Activated T-helper 1 cell treated with anti-CD3 and anti-CD28 coated beads, Interleukin-12 subunit alpha, Interleukin-12 subunit beta, Interleukin-2, Interleukin-4 antibody, amounts not matched to agents 30 ng/mL and 10 ng/mL and 1 ng/mL, durations not matched to agents 14 hours and 24 hours and 36 hours (primary cell): ENCODE measurements at regions of chr22 and their contacts with region 1.

Region 1: DNA sequence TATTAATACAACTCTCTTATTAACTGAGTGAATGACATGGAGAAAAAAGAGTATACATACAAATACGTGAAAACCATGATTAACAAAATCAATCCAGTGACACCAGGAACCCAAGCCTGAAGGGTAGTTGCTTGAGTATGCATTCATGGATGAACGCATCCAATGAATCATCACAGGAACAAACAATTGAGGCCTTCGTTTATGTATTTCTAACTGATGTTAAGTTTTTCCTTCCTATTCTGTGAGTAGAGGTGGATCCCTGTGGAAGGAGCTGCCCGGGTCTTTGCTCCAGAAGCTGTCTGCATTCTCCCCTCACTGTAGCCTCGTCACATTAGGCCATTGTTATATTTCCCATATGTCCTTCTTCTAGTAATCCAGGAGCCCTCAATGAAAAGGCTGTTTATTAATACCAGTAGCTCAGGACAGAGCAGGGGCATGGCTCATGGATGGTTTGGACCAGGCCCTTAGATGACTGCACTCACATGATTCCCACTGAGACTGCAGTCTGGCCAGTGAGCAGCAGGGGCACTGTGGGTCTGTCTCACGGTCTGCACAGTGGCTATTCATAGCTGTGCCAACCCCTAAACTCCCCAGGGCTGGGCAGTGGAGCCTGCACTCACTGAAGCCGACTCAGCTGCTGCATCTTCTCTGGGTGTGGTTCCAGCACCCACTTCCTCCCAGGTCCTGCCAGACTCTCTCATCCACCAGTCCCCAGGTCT is 128.1 kb upstream of the TOP3B start:
- DNase-seq: peak; percentile 60
- H3K4me3 Mint-ChIP-seq: peak overlapping the region; percentile 43
- H3K27ac Mint-ChIP-seq: peak overlapping the region; percentile 79
- H3K4me1 Mint-ChIP-seq: peaks cover 27% of the 10 kb centered on the region
- H3K27me3 Mint-ChIP-seq: peaks cover 7% of the 10 kb centered on the region

Region 2: DNA sequence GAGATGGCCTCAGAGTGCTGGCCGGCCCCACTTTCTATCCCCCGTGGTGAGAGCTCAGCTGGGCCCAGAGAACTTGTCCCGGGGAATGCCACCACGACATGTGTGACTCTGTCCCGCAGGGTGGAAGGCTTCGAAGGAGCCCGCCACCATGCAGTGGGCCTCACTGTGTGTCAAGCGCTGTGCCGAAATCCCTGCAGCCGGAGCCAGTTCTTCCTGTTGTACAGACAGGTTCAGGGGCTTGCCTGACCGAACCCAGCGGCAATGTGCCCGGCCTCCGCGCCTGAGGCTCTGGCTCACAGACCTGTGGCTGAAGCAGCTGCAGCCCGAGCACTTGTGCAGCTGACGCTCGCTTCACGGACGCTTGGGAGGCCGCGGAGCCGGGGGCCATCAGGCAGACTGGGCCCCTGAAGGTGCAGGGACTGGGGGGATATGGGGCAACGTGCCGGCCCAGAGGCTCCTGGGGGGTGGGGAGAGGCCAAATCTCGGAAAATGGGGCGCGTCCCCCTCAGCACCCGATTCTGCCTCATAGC is 158.7 kb before region 1 on chr22:
- intact Hi-C with region 1: no loop called
- DNase-seq: no peak
- H3K4me3 Mint-ChIP-seq: peak overlapping the region; percentile 79
- H3K27ac Mint-ChIP-seq: peak overlapping the region; percentile 61
- H3K4me1 Mint-ChIP-seq: peaks cover 6% of the 10 kb centered on the region
- H3K27me3 Mint-ChIP-seq: no peaks in the 10 kb centered on the region

Region 3: DNA sequence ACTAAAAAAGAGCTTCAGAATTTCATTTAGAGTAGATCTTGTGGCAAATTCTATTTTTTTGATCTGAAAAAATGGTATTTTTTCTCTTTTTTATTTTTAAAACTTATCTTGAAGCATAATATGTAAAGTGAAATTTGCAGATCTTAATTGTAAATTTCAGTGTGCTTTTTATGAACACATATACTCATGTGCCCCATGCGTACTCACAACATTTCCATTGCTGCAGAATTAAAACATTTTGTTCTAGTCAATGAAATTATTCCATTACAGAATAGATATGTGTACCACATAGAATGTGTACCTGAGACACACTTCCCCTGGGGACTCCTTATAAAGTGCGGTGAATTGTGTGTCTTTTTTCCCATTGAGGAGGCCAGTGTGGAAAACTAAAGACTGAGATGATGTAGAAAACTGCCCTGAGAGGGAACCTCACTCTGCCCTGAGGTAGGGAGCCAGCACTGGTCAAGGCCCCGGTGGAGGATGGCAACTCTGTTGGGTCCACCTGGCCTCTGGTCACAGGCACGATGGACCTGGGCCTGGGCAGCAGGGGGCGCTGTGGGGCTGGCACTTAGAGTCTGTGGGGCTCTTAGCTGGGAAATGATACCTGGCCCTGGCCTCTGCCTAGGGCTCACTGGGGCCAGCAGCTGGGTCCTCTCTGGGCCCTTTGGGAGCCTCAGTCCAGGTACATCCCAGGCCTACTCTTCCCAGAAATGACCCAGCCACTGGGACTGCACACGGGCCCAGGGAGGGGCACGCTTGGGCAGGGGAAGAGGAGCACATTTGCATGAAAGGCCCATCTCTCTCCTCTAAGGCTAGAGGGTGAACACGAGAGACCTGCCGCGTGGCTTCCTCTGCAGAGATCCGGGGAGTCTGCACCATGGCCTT is 50.3 kb before region 1 on chr22:
- intact Hi-C with region 1: loop called (anchors 1 kb)
- DNase-seq: peak; percentile 46
- H3K4me3 Mint-ChIP-seq: no peak overlapping the region
- H3K27ac Mint-ChIP-seq: no peak overlapping the region
- H3K4me1 Mint-ChIP-seq: no peaks in the 10 kb centered on the region
- H3K27me3 Mint-ChIP-seq: peaks cover 12% of the 10 kb centered on the region

Region 4: GRCh38 chr22:22092974-22093373 is 17.7 kb before region 1 on chr22:
- intact Hi-C with region 1: loop called (anchors 1 kb)
- DNase-seq: no peak
- H3K4me3 Mint-ChIP-seq: no peak overlapping the region
- H3K27ac Mint-ChIP-seq: peak overlapping the region; percentile 3
- H3K4me1 Mint-ChIP-seq: peaks cover 31% of the 10 kb centered on the region
- H3K27me3 Mint-ChIP-seq: peaks cover 14% of the 10 kb centered on the region

Region 5: DNA sequence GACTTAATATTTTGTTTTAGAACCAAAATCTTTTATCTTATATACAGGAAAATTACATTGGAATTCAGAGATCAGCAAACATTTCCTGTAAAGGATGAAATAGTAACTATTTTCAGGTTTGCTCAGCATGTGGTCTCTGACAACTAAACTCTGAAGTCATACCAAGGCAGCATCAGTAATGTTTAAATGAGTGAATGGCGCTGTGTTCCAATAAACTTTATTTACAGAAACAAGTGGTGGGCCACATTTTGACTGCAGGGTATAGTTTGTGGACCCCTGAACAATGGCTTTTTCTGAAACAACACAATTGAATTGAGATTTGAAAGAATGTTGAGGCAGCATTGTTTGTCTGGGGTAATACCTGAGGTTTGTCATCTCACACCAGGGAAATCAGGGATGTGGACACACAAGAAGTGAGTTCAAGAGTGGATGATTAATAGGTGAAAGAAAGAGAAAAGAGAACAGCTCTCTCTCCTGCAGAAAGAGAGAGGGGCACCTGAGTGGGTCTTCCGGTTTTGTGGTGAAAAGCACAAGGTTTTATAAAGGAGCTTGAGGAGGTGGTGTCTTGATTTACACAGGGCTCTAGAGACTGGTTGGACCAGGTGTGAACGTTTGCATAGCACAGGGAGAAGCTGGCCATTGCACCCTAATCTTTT is 20.4 kb after region 1 on chr22:
- intact Hi-C with region 1: loop called (anchors 1 kb)
- DNase-seq: no peak
- H3K4me3 Mint-ChIP-seq: no peak overlapping the region
- H3K27ac Mint-ChIP-seq: no peak overlapping the region
- H3K4me1 Mint-ChIP-seq: peaks cover 14% of the 10 kb centered on the region
- H3K27me3 Mint-ChIP-seq: peaks cover 11% of the 10 kb centered on the region

Region 6: DNA sequence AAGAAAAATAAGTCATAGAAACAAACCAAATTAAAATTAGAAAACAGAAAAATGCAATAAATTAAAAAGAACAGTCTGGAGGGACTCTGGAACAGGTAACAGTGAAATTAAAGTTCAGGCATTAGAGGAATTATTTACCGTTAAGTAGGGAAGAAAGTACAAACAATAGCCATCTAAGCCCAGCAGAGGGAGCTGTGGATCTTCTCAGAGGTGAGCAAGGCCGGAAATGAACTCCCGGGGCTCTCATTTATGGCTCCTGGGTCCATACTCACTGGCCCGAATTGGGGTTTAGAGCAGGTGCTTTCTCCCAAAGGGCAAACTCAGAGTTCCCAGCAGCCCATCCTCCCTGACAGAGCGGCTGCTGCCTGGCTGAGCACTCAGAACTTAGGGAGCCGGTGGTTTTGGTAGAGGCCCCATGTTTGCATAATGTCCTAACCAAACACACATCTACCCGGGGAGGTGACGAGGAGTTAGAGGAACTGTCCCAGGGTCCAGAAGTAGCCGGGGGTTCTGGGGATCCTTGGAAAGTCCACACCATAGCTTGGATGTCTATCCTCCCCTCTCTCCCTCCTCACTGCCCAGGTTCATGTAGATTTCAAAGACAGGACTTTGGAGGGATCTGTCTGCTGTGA is 46.1 kb after region 1 on chr22:
- intact Hi-C with region 1: loop called (anchors 2 kb)
- DNase-seq: peak; percentile 48
- H3K4me3 Mint-ChIP-seq: no peak overlapping the region
- H3K27ac Mint-ChIP-seq: peak overlapping the region; percentile 51
- H3K4me1 Mint-ChIP-seq: peaks cover 4% of the 10 kb centered on the region
- H3K27me3 Mint-ChIP-seq: peaks cover 16% of the 10 kb centered on the region

Region 7: GRCh38 chr22:22207845-22208564 is 97.3 kb after region 1 on chr22:
- intact Hi-C with region 1: loop called (anchors 1 kb)
- DNase-seq: peak; percentile 75
- H3K4me3 Mint-ChIP-seq: no peak overlapping the region
- H3K27ac Mint-ChIP-seq: peak overlapping the region; percentile 84
- H3K4me1 Mint-ChIP-seq: peaks cover 41% of the 10 kb centered on the region
- H3K27me3 Mint-ChIP-seq: peaks cover 4% of the 10 kb centered on the region